Endothelial cell of umbilical vein (primary cell): ENCODE measurements at regions of chr3 and their contacts with region 1.

Region 1: DNA sequence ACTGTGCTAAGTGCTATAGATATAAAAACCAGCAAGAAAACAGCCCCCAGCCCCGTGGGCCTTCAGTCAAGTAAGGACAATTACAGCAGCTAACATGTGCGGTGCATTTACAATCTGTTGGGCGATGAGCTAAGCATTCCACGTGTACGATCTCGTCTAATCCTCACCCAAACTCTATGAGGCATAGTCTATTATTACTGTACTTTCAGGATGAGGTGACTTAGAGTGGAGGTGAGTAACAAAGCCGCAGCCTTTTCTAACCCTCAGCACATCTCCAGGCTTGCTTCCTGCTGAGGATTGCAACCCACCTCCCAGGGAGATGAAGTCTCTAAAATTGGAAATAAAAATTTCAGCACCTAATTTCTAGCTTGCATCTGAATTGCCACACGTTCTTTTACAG is 53.2 kb upstream of the MCF2L2 start:
- DNase-seq: no peak
- H3K4me3 ChIP-seq: no peak overlapping the region
- H3K27ac ChIP-seq: no peak overlapping the region
- H3K4me1 ChIP-seq: no peaks in the 10 kb centered on the region
- H3K27me3 ChIP-seq: no peaks in the 10 kb centered on the region
- CTCF ChIP-seq: no peak
- POLR2A ChIP-seq: no peak

Region 2: GRCh38 chr3:183455089-183455488 is 26.5 kb before region 1 on chr3:
- CTCF ChIA-PET with region 1: interaction called, 15 read pairs
- POLR2A ChIA-PET with region 1: no interaction called
- dilution Hi-C with region 1: no loop called
- intact Hi-C with region 1: no loop called
- DNase-seq: peak; percentile 83
- H3K4me3 ChIP-seq: no peak overlapping the region
- H3K27ac ChIP-seq: peak overlapping the region; percentile 27
- H3K4me1 ChIP-seq: peaks cover 21% of the 10 kb centered on the region
- H3K27me3 ChIP-seq: no peaks in the 10 kb centered on the region
- CTCF ChIP-seq: no peak
- POLR2A ChIP-seq: peak; percentile 24

Region 3: DNA sequence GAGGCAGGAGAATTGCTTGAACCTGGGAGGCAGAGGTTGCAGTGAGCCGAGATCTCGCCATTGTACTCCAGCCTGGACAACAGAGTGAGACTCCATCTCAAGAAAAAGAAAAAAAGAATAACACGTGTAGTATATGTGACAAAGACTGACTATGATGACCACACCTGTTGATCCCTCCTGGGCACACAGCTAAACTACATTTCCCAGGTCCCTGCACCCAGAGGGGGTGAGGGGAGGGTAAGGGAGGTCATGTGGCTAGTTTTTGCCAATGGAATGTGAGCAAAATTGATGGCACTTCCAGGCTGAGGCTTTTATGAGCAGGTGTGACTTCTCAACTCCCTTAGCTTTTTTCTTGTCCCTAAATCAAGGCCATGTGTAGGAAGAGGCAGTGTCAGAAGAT is 15.7 kb after region 1 on chr3:
- CTCF ChIA-PET with region 1: interaction called, 11 read pairs
- POLR2A ChIA-PET with region 1: no interaction called
- dilution Hi-C with region 1: no loop called
- intact Hi-C with region 1: no loop called
- DNase-seq: no peak
- H3K4me3 ChIP-seq: no peak overlapping the region
- H3K27ac ChIP-seq: no peak overlapping the region
- H3K4me1 ChIP-seq: no peaks in the 10 kb centered on the region
- H3K27me3 ChIP-seq: no peaks in the 10 kb centered on the region
- CTCF ChIP-seq: no peak
- POLR2A ChIP-seq: no peak

Region 4: GRCh38 chr3:183548262-183548769 is 66.7 kb after region 1 on chr3:
- CTCF ChIA-PET with region 1: interaction called, 11 read pairs
- POLR2A ChIA-PET with region 1: no interaction called
- dilution Hi-C with region 1: no loop called
- intact Hi-C with region 1: loop called (anchors 10 kb)
- DNase-seq: peak; percentile 94
- H3K4me3 ChIP-seq: no peak overlapping the region
- H3K27ac ChIP-seq: peak overlapping the region; percentile 81
- H3K4me1 ChIP-seq: peaks cover 32% of the 10 kb centered on the region
- H3K27me3 ChIP-seq: no peaks in the 10 kb centered on the region
- CTCF ChIP-seq: no peak
- POLR2A ChIP-seq: no peak

Region 5: GRCh38 chr3:183635431-183636220 is 154.0 kb after region 1 on chr3 and contains the start of gene KLHL24:
- CTCF ChIA-PET with region 1: interaction called, 13 read pairs
- POLR2A ChIA-PET with region 1: interaction called, 6 read pairs
- dilution Hi-C with region 1: no loop called
- intact Hi-C with region 1: loop called (anchors 5 kb)
- DNase-seq: peak; percentile 93
- H3K4me3 ChIP-seq: peak within 1 kb of the TSS; percentile 81 to 99 (median 84)
- H3K27ac ChIP-seq: peak within 1 kb of the TSS; percentile 89
- H3K4me1 ChIP-seq: peaks cover 19% of the 10 kb centered on the region
- H3K27me3 ChIP-seq: no peaks in the 10 kb centered on the region
- CTCF ChIP-seq: no peak
- POLR2A ChIP-seq: peak; percentile 41
- total RNA-seq, gene KLHL24: 45.8 and 46.2 TPM in 2 replicates

Region 6: DNA sequence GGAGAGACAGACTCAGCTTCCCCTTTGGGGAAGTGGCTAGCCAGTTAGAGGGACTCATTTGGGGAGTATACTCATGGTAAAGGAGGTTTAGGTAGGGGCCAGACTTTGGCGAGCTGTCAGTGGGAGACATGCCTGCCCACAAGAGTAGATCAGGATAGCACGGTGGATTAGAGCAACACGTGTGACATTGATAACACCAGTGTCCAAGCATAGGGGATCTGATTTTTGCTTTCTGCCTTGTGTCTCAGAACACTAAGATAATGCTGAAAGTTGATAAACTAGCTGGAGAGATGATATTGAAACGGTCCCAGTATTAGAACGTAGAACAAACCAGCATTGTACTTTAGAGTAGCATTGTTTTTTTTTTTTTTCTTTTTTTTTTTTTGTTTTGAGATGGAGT is 317.9 kb after region 1 on chr3:
- CTCF ChIA-PET with region 1: no interaction called
- POLR2A ChIA-PET with region 1: no interaction called
- dilution Hi-C with region 1: no loop called
- intact Hi-C with region 1: no loop called
- DNase-seq: no peak
- H3K4me3 ChIP-seq: no peak overlapping the region
- H3K27ac ChIP-seq: no peak overlapping the region
- H3K4me1 ChIP-seq: no peaks in the 10 kb centered on the region
- H3K27me3 ChIP-seq: no peaks in the 10 kb centered on the region
- CTCF ChIP-seq: no peak
- POLR2A ChIP-seq: no peak